Esophagus muscularis mucosa (tissue), 4 donors: ENCODE measurements at regions of chr13 and their contacts with region 1.

Region 1: DNA sequence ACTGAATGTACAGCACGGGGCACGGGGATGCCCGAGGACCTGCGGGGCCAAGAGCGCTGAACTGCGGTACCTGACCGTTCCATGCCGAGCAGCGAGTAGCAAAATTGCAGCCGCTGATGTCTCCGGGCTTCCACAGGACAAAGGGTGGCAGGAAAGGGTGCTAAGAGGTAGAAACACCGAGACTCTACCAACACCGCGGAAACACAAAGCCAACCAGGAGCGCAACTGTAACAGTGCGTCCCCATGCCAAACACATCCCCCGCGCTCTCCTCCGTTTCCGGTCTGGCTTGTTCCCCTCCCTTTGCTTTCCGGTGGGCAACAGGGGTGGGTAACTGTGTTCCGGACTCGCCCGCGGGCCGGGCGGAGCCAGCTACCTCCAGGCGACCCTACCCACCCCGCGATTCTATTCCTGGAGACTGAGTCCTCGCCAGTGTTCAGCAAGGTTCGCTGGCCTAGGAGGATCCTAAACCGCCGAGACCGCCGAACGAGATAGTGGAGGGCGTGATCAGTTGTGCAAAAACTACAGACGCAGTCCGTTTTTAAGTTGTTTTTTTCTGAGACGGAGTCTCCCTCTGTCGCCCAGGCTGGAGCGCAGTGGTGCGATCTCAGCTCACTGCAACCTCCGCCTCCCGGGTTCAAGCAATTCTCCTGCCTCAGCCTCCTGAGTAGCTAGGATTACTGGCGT is 34.9 kb upstream of the NEK3 start:
- DNase-seq: peak; percentile 94
- H3K4me3 ChIP-seq: peak overlapping the region; percentile 75 to 92 (median 78)
- H3K27ac ChIP-seq: peak overlapping the region; percentile 83 to 90 (median 90)
- H3K4me1 ChIP-seq: peaks cover 11 to 42% (median 29%) of the 10 kb centered on the region in 4 donors
- H3K27me3 ChIP-seq: no peaks in the 10 kb centered on the region
- CTCF ChIP-seq: peak in 1 of 3 experiments; percentile 6
- EP300 ChIP-seq: no peak
- POLR2A ChIP-seq: no peak

Region 2: GRCh38 chr13:51599444-51600176 is 594.7 kb before region 1 on chr13:
- intact Hi-C with region 1: no loop called
- DNase-seq: no peak
- H3K4me3 ChIP-seq: no peak overlapping the region
- H3K27ac ChIP-seq: no peak overlapping the region
- H3K4me1 ChIP-seq: no peaks in the 10 kb centered on the region
- H3K27me3 ChIP-seq: no peaks in the 10 kb centered on the region
- CTCF ChIP-seq: no peak
- EP300 ChIP-seq: no peak
- POLR2A ChIP-seq: no peak

Region 3: GRCh38 chr13:52159321-52160086 is 34.8 kb before region 1 on chr13 and contains the start of gene NEK3:
- intact Hi-C with region 1: loop called (anchors 2 kb)
- DNase-seq: peak; percentile 92
- H3K4me3 ChIP-seq: peak within 1 kb of the TSS; percentile 79 to 97 (median 85)
- H3K27ac ChIP-seq: peak within 1 kb of the TSS; percentile 83 to 89 (median 86)
- H3K4me1 ChIP-seq: peaks cover 17 to 34% (median 25%) of the 10 kb centered on the region in 4 donors
- H3K27me3 ChIP-seq: no peaks in the 10 kb centered on the region
- CTCF ChIP-seq: no peak
- EP300 ChIP-seq: no peak
- POLR2A ChIP-seq: no peak
- total RNA-seq, gene NEK3: 5.0 to 11.6 (median 6.9) TPM

Region 4: GRCh38 chr13:52450012-52450792 is 255.9 kb after region 1 on chr13 and contains the start of gene VPS36:
- intact Hi-C with region 1: loop called (anchors 5 kb)
- DNase-seq: peak; percentile 98
- H3K4me3 ChIP-seq: peak within 1 kb of the TSS; percentile 81 to 97 (median 91)
- H3K27ac ChIP-seq: peak within 1 kb of the TSS; percentile 89 to 95 (median 94)
- H3K4me1 ChIP-seq: peaks cover 28 to 42% (median 38%) of the 10 kb centered on the region in 4 donors
- H3K27me3 ChIP-seq: no peaks in the 10 kb centered on the region
- CTCF ChIP-seq: peak in 2 of 3 experiments; percentile 99
- EP300 ChIP-seq: no peak
- POLR2A ChIP-seq: peak; percentile 89
- total RNA-seq, gene VPS36: 29.5 to 34.0 (median 33.1) TPM